GM12878 (cell line): ENCODE measurements at regions of chr1 and their contacts with region 1.

Region 1: GRCh38 chr1:169933984-169934725 is 40.5 kb upstream of the SCYL3 start:
- DNase-seq: no peak
- ATAC-seq: no peak
- H3K4me3 ChIP-seq: no peak overlapping the region
- H3K27ac ChIP-seq: no peak overlapping the region
- H3K4me1 ChIP-seq: no peaks in the 10 kb centered on the region
- H3K27me3 ChIP-seq: no peaks in the 10 kb centered on the region
- CTCF ChIP-seq: no peak
- EP300 ChIP-seq: no peak
- POLR2A ChIP-seq: no peak
- RAD21 ChIP-seq: no peak

Region 2: GRCh38 chr1:168084396-168085231 is 1849.5 kb before region 1 on chr1:
- CTCF ChIA-PET with region 1: no interaction called
- POLR2A ChIA-PET with region 1: no interaction called
- RAD21 ChIA-PET with region 1: no interaction called
- SMC1A ChIA-PET with region 1: no interaction called
- in situ Hi-C with region 1: no loop called
- intact Hi-C with region 1: no loop called
- DNase-seq: no peak
- ATAC-seq: peak; percentile 81
- H3K4me3 ChIP-seq: no peak overlapping the region
- H3K27ac ChIP-seq: no peak overlapping the region
- H3K4me1 ChIP-seq: no peaks in the 10 kb centered on the region
- H3K27me3 ChIP-seq: 0 out of 4 replicates have a peak, but pooled peaks cover 0 to 1% of the 10 kb centered on the region in 2 experiments
- CTCF ChIP-seq: peak; percentile 67 to 94 (median 87)
- EP300 ChIP-seq: no peak
- POLR2A ChIP-seq: no peak
- RAD21 ChIP-seq: peak; percentile 42

Region 3: GRCh38 chr1:169945138-169945537 is 11.0 kb after region 1 on chr1:
- CTCF ChIA-PET with region 1: interaction called, 3 read pairs
- POLR2A ChIA-PET with region 1: interaction called, 3 read pairs
- RAD21 ChIA-PET with region 1: interaction called, 5 read pairs
- SMC1A ChIA-PET with region 1: interaction called, 15 read pairs
- in situ Hi-C with region 1: no loop called
- intact Hi-C with region 1: no loop called
- DNase-seq: no peak
- ATAC-seq: no peak
- H3K4me3 ChIP-seq: no peak overlapping the region
- H3K27ac ChIP-seq: no peak overlapping the region
- H3K4me1 ChIP-seq: no peaks in the 10 kb centered on the region
- H3K27me3 ChIP-seq: no peaks in the 10 kb centered on the region
- CTCF ChIP-seq: no peak
- EP300 ChIP-seq: no peak
- POLR2A ChIP-seq: no peak
- RAD21 ChIP-seq: no peak

Region 4: GRCh38 chr1:169985757-169986156 is 51.6 kb after region 1 on chr1:
- CTCF ChIA-PET with region 1: no interaction called
- POLR2A ChIA-PET with region 1: no interaction called
- RAD21 ChIA-PET with region 1: interaction called, 4 read pairs
- SMC1A ChIA-PET with region 1: no interaction called
- in situ Hi-C with region 1: no loop called
- intact Hi-C with region 1: loop called (anchors 1 kb)
- DNase-seq: no peak
- ATAC-seq: no peak
- H3K4me3 ChIP-seq: no peak overlapping the region
- H3K27ac ChIP-seq: no peak overlapping the region
- H3K4me1 ChIP-seq: no peaks in the 10 kb centered on the region
- H3K27me3 ChIP-seq: no peaks in the 10 kb centered on the region
- CTCF ChIP-seq: no peak
- EP300 ChIP-seq: no peak
- POLR2A ChIP-seq: no peak
- RAD21 ChIP-seq: no peak

Region 5: GRCh38 chr1:170032531-170033280 is 98.6 kb after region 1 on chr1:
- CTCF ChIA-PET with region 1: no interaction called
- POLR2A ChIA-PET with region 1: no interaction called
- RAD21 ChIA-PET with region 1: no interaction called
- SMC1A ChIA-PET with region 1: no interaction called
- in situ Hi-C with region 1: no loop called
- intact Hi-C with region 1: no loop called
- DNase-seq: no peak
- ATAC-seq: no peak
- H3K4me3 ChIP-seq: no peak overlapping the region
- H3K27ac ChIP-seq: no peak overlapping the region
- H3K4me1 ChIP-seq: no peaks in the 10 kb centered on the region
- H3K27me3 ChIP-seq: no peaks in the 10 kb centered on the region
- CTCF ChIP-seq: no peak
- EP300 ChIP-seq: no peak
- POLR2A ChIP-seq: no peak
- RAD21 ChIP-seq: no peak

Region 6: DNA sequence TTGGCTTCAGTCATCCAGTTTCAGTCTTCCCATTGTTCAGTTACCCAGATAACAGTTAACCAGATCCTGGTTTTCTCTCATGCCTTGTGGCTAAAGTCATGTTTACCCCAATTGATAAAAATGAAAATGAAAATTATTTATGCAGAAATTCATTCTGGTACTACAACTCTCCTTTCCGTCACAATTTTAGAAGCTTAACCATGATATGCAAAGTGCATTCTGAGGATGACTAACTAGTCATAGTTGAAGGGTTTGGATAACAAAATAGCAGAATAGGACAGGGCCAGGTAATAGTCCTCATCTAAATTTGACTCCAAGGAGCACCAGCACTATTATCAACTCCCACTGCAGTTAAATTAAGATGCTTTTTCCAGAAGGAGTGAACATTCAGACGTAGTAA is 306.3 kb after region 1 on chr1:
- CTCF ChIA-PET with region 1: no interaction called
- POLR2A ChIA-PET with region 1: no interaction called
- RAD21 ChIA-PET with region 1: no interaction called
- SMC1A ChIA-PET with region 1: no interaction called
- in situ Hi-C with region 1: no loop called
- intact Hi-C with region 1: loop called (anchors 10 kb)
- DNase-seq: peak; percentile 32
- ATAC-seq: peak; percentile 94
- H3K4me3 ChIP-seq: no peak overlapping the region
- H3K27ac ChIP-seq: no peak overlapping the region
- H3K4me1 ChIP-seq: peaks cover 10% of the 10 kb centered on the region; the same call in 1 of the 2 replicates
- H3K27me3 ChIP-seq: no peaks in the 10 kb centered on the region
- CTCF ChIP-seq: no peak
- EP300 ChIP-seq: peak; percentile 9 to 39; a peak in 2 of 4 replicates
- POLR2A ChIP-seq: no peak
- RAD21 ChIP-seq: no peak